Gastrocnemius medialis (tissue), 4 donors: ENCODE measurements at regions of chr7 and their contacts with region 1.

Region 1: GRCh38 chr7:149028346-149029109 is at the start of gene PDIA4:
- DNase-seq: peak; percentile 99
- ATAC-seq: peak; percentile 97
- H3K4me3 ChIP-seq: peak within 1 kb of the TSS; percentile 70 to 93 (median 86)
- H3K27ac ChIP-seq: peak within 1 kb of the TSS; percentile 83 to 98 (median 94)
- H3K4me1 ChIP-seq: peaks cover 16 to 21% of the 10 kb centered on the region in 2 donors
- H3K27me3 ChIP-seq: no peaks in the 10 kb centered on the region
- CTCF ChIP-seq: peak in 4 of 5 experiments; percentile 34 to 44 (median 40)
- POLR2A ChIP-seq: peak; percentile 72 to 94
- total RNA-seq, gene PDIA4: 10.8 to 19.6 (median 14.2) TPM

Region 2: DNA sequence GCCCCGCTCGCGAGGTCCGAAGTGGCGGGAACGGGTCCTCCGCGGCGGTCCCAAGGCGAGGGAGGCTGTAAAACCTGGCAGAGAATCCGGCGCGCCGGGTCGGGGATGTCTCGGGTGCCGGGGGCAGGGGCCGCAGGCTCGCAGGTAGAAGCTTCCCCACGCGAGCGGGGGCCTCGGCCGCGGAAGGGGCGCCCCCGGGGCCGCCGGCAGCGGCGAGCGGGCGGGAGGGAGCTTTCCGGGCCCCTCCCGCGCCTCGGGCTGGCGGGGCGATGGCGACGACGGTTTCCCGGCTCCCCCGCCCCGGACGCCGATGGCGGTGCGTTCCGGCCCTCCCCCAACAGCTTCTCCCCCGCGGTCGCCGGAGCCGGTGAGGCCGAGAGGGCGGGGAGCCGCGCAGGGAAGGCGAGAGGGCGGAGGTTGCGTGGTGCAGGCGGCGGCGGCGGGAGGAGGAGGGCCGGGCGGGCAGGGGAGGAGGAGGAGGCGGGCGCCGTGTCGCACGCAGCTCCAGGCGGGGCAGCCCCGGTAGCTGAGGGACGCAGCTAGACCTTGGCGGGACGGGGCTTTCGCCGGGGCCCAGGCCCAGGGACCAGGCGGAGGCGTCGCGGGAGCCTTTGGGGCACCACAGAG is 330.0 kb before region 1 on chr7 and contains the start of gene CUL1:
- in situ Hi-C with region 1: no loop called
- intact Hi-C with region 1: loop called (anchors 2 kb)
- DNase-seq: peak; percentile 75 to 82
- ATAC-seq: peak; percentile 74 to 82
- H3K4me3 ChIP-seq: peak within 1 kb of the TSS; percentile 56 to 81 (median 72)
- H3K27ac ChIP-seq: peak within 1 kb of the TSS; percentile 85 to 96 (median 92)
- H3K4me1 ChIP-seq: peaks cover 34 to 35% of the 10 kb centered on the region in 2 donors
- H3K27me3 ChIP-seq: no peaks in the 10 kb centered on the region
- CTCF ChIP-seq: no peak
- POLR2A ChIP-seq: peak; percentile 68 to 72
- total RNA-seq, gene CUL1: 78.7 to 101 (median 84.6) TPM

Region 3: GRCh38 chr7:148884299-148885022 is 144.1 kb before region 1 on chr7:
- in situ Hi-C with region 1: no loop called
- intact Hi-C with region 1: loop called (anchors 1 kb)
- DNase-seq: peak; percentile 88 to 92
- ATAC-seq: peak; percentile 91 to 93
- H3K4me3 ChIP-seq: peak overlapping the region; percentile 74 to 92 (median 85)
- H3K27ac ChIP-seq: peak overlapping the region; percentile 87 to 96 (median 92)
- H3K4me1 ChIP-seq: peaks cover 7 to 8% of the 10 kb centered on the region in 2 donors
- H3K27me3 ChIP-seq: peaks cover 0 to 3% (median 0%) of the 10 kb centered on the region in 3 donors
- CTCF ChIP-seq: no peak
- POLR2A ChIP-seq: peak; percentile 91 to 92

Region 4: GRCh38 chr7:148919859-148920258 is 108.7 kb before region 1 on chr7:
- in situ Hi-C with region 1: no loop called
- intact Hi-C with region 1: no loop called
- DNase-seq: no peak
- ATAC-seq: no peak
- H3K4me3 ChIP-seq: no peak overlapping the region
- H3K27ac ChIP-seq: no peak overlapping the region
- H3K4me1 ChIP-seq: no peaks in the 10 kb centered on the region
- H3K27me3 ChIP-seq: no peaks in the 10 kb centered on the region
- CTCF ChIP-seq: no peak
- POLR2A ChIP-seq: no peak

Region 5: DNA sequence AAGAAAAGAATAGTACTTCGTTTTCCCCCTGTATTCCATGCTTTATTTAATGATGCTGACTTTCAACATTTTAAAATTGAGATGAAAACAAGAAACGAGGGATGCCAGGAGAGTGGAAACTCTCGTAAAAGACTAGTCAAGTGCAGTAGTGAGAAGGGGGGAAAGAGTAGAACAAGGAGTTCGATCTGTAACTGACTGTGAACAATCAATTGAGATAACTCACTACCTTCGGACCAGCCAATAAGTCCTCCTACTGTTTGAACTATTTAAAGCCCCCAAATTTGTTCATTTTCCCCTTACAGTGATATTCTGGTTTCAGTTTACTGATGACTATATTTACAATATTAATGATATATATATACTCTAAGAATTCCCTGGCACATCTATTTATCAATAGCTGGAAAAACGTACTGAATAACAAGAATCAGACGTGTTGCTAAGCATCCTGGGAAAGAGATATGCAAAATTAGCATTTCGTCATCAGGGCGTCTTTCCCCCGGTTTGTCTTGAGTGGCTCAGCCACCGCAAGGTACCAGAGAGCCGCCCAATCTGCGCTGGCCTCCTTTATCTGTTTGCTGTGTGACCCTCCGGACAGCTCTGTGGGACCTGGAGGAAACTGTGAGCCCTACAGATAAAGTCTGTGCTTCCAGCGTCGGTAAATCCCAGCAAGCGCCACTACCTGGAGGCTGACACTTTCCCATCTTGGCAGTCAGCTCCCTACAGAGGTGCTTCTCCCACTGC is 41.3 kb before region 1 on chr7:
- in situ Hi-C with region 1: no loop called
- intact Hi-C with region 1: loop called (anchors 1 kb)
- DNase-seq: peak; percentile 73 to 76
- ATAC-seq: peak; percentile 92 to 94
- H3K4me3 ChIP-seq: peak overlapping the region; percentile 68 to 85 (median 70)
- H3K27ac ChIP-seq: peak overlapping the region; percentile 70 to 82 (median 76)
- H3K4me1 ChIP-seq: peaks cover 24 to 37% of the 10 kb centered on the region in 2 donors
- H3K27me3 ChIP-seq: no peaks in the 10 kb centered on the region
- CTCF ChIP-seq: no peak
- POLR2A ChIP-seq: no peak

Region 6: GRCh38 chr7:149067876-149068275 is 39.3 kb after region 1 on chr7:
- in situ Hi-C with region 1: no loop called
- intact Hi-C with region 1: loop called (anchors 1 kb)
- DNase-seq: no peak
- ATAC-seq: no peak
- H3K4me3 ChIP-seq: no peak overlapping the region
- H3K27ac ChIP-seq: no peak overlapping the region
- H3K4me1 ChIP-seq: no peaks in the 10 kb centered on the region
- H3K27me3 ChIP-seq: no peaks in the 10 kb centered on the region
- CTCF ChIP-seq: no peak
- POLR2A ChIP-seq: no peak

Region 7: GRCh38 chr7:149125863-149126661 is 97.5 kb after region 1 on chr7 and contains the start of gene ZNF425:
- in situ Hi-C with region 1: no loop called
- intact Hi-C with region 1: loop called (anchors 1 kb)
- DNase-seq: peak; percentile 80 to 85
- ATAC-seq: peak; percentile 92 to 93
- H3K4me3 ChIP-seq: peak within 1 kb of the TSS; percentile 79 to 100 (median 96)
- H3K27ac ChIP-seq: peak within 1 kb of the TSS; percentile 94 to 98 (median 96)
- H3K4me1 ChIP-seq: peaks cover 9% of the 10 kb centered on the region in 2 donors
- H3K27me3 ChIP-seq: no peaks in the 10 kb centered on the region
- CTCF ChIP-seq: peak; percentile 96 to 99 (median 97)
- POLR2A ChIP-seq: peak; percentile 84 to 91
- total RNA-seq, gene ZNF425: 1.2 to 3.2 (median 1.5) TPM